ENCODE measurements at regions of chr6 and their contacts with region 1.

Region 1: DNA sequence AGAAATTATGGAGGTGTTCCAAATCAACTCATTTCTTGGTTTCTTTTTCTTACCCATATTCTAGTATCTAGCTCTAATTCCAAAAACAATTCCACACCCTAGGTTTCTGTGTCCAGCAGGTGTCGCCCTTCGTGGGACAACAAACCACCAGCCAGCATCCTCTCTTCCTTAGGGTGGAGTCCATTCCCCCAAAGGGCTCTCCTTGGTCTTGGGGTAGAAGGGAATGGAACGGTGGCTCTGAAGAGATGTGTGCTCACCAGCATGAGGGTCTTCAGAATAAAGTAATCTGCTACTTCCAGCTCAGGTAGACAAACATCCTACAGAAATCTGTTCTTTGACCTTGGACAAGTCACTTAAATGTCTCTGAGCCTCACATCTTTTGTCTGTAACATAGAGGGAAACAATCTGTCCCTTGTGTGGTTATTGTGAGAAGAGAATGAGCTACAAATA is 7.2 kb downstream of the HLA-DMB start:
- DNase-seq: peak; percentile 79
- H3K4me3 Mint-ChIP-seq: no peak overlapping the region
- H3K27ac Mint-ChIP-seq: no peak overlapping the region
- H3K4me1 Mint-ChIP-seq: peaks cover 16% of the 10 kb centered on the region
- H3K27me3 Mint-ChIP-seq: peaks cover 2% of the 10 kb centered on the region

Region 2: DNA sequence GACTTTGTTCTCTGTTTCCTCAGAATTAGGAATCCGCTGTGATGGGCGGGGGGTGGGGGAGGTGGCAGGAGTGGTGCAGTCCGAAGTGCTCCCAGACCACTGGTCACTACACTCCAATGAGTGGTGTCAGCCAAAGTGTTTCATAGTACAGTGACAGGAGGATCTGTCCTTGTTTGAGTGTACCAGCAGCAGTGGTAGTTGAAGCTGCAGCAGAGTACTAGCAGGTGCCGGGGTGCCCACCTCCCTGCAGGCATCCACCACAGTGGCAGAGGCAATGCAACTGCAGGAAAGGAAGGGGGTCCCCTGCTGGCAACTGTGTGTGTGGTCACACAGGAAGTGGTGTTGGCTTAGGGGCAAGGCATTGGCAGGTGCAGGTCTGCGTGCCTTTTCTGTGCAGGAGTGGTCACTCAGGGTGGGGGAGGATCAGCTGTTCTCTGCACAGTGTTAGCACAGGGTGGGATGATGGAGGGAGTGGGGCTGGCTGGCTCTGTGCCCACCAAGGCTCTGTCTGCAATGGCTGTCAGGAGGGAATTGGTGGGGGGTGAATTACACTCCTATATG is 126.6 kb before region 1 on chr6:
- CTCF ChIA-PET with region 1: no interaction called
- POLR2A ChIA-PET with region 1: no interaction called
- DNase-seq: no peak
- H3K4me3 Mint-ChIP-seq: no peak overlapping the region
- H3K27ac Mint-ChIP-seq: no peak overlapping the region
- H3K4me1 Mint-ChIP-seq: no peaks in the 10 kb centered on the region
- H3K27me3 Mint-ChIP-seq: peaks cover 44% of the 10 kb centered on the region

Region 3: DNA sequence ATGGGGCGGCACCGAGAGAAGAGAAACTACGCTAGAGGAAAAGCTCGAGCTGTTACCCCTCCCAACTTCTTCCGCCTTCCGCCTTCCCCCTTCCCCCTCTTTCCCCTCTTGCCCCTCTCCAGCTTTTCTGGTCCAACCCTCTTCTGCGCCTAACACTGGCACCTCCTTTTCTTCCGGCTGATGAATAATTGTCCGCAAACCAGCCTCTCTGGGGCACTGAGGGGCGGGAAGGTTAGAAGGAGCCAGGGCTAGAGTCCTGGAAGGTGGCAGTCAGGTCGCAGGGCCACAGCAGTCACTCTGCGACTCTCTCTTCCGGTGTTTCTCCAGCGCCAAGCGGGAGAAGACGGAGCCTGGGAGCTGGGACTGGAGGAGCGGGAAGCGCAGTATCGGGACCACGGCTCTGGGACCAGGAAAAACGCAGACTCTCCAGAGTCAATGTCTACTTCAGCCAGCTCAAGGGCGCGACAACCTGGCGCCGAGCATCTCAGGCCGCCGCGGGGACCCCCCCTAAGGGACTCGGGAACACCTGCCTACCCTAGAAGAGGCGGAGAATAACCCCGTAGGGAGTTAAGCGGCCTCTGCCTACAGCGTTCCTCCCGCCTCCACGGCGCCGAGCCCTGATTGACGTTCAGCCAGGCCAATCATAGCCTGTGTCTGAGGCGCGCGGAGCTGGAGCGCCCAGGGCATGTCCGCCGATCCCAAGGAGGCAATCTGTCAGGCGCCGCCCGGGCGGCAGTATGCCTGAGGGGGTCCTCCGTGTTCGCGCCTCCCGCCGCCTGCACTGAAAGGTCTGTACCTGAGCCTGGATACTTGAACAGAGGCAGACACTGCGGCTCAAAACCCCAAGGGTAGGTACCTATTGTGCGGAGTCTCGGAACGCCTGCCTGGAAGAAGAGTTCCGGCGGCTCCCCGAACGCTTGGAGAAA is 39.3 kb before region 1 on chr6:
- CTCF ChIA-PET with region 1: interaction called, 12 read pairs
- POLR2A ChIA-PET with region 1: interaction called, 4 read pairs
- DNase-seq: peak; percentile 95
- H3K4me3 Mint-ChIP-seq: peak overlapping the region; percentile 99
- H3K27ac Mint-ChIP-seq: peak overlapping the region; percentile 91
- H3K4me1 Mint-ChIP-seq: peaks cover 40% of the 10 kb centered on the region
- H3K27me3 Mint-ChIP-seq: peaks cover 8% of the 10 kb centered on the region

Region 4: DNA sequence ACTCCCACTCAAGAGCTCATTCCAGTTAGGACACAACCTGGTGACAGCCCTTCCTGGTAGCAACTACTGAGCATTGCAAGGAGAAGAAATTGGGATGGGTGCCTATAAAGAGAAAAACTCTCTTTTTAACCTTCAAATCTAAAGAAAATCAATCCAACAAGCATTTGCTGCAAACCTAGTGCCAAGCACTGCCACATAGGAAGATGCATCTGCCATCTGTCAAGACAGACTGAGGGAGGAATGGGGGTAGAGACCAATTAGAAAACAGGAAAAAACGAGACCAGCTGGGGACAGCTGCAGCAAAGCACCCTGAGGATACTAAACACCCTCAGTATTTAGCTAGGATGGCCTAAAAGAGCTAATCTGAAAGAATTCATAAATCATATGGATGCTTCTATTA is 20.7 kb before region 1 on chr6:
- CTCF ChIA-PET with region 1: interaction called, 20 read pairs
- POLR2A ChIA-PET with region 1: no interaction called
- DNase-seq: no peak
- H3K4me3 Mint-ChIP-seq: no peak overlapping the region
- H3K27ac Mint-ChIP-seq: no peak overlapping the region
- H3K4me1 Mint-ChIP-seq: peaks cover 8% of the 10 kb centered on the region
- H3K27me3 Mint-ChIP-seq: peaks cover 44% of the 10 kb centered on the region

Region 5: GRCh38 chr6:32920715-32921114 is 12.9 kb before region 1 on chr6:
- CTCF ChIA-PET with region 1: interaction called, 12 read pairs
- POLR2A ChIA-PET with region 1: no interaction called
- DNase-seq: no peak
- H3K4me3 Mint-ChIP-seq: no peak overlapping the region
- H3K27ac Mint-ChIP-seq: no peak overlapping the region
- H3K4me1 Mint-ChIP-seq: peaks cover 8% of the 10 kb centered on the region
- H3K27me3 Mint-ChIP-seq: peaks cover 23% of the 10 kb centered on the region

Region 6: GRCh38 chr6:32947552-32948465 is 14.1 kb after region 1 on chr6:
- CTCF ChIA-PET with region 1: interaction called, 181 read pairs
- POLR2A ChIA-PET with region 1: interaction called, 15 read pairs
- DNase-seq: peak; percentile 51
- H3K4me3 Mint-ChIP-seq: no peak overlapping the region
- H3K27ac Mint-ChIP-seq: no peak overlapping the region
- H3K4me1 Mint-ChIP-seq: peaks cover 63% of the 10 kb centered on the region
- H3K27me3 Mint-ChIP-seq: no peaks in the 10 kb centered on the region

Region 7: DNA sequence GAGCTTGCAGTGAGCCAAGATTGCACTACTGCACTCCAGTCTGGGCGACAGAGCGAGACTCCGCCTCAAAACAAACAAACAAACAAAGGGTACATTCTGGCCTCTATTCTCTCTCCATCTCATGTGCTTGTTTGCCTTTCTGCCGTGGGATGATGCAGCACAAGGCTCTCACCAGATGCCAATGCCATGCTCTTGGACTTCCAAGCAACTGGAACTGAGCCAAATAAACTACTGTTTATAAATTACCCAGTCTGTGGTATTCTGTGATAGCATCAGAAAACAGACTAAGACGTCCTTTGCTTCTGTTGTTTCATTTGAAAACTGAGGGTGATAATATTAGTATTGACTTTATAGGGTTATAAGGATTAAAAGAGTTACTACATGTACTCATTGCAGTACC is 31.1 kb after region 1 on chr6:
- CTCF ChIA-PET with region 1: interaction called, 41 read pairs
- POLR2A ChIA-PET with region 1: interaction called, 303 read pairs
- DNase-seq: no peak
- H3K4me3 Mint-ChIP-seq: no peak overlapping the region
- H3K27ac Mint-ChIP-seq: no peak overlapping the region
- H3K4me1 Mint-ChIP-seq: peaks cover 38% of the 10 kb centered on the region
- H3K27me3 Mint-ChIP-seq: no peaks in the 10 kb centered on the region

Measured in activated CD4-positive, alpha-beta memory T cell treated with anti-CD3 and anti-CD28 coated beads, Interleukin-2, amount 10 ng/mL, durations not matched to agents 7 days and 5 days (primary cell).